Activated naive CD4-positive, alpha-beta T cell treated with anti-CD3 and anti-CD28 coated beads for 36 hours (primary cell): ENCODE measurements at regions of chr12 and their contacts with region 1.

Region 1: DNA sequence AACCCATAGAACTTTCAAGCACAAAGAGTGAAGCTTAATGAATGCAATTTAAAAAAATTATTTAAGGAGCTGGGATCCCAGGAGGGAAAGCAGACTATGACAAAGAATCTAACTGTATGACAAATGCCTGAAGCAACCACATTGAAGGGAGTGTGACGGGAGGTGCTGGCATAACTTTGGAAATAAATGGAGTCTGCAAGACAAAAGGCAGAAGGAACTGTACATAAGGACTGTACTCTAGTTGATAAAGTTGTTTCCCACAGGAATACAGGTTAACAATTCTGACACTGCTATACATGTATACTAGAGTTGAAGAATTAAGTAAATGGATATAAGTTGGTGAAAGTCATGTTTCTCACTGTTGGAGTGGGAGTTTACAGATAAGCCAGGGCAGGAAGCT is 41.2 kb upstream of the WSCD2 start:
- DNase-seq: no peak
- H3K4me3 Mint-ChIP-seq: no peak overlapping the region
- H3K27ac Mint-ChIP-seq: no peak overlapping the region
- H3K4me1 Mint-ChIP-seq: no peaks in the 10 kb centered on the region
- H3K27me3 Mint-ChIP-seq: no peaks in the 10 kb centered on the region

Region 2: GRCh38 chr12:108099073-108099472 is 11.2 kb after region 1 on chr12:
- CTCF ChIA-PET with region 1: interaction called, 11 read pairs
- intact Hi-C with region 1: no loop called
- DNase-seq: no peak
- H3K4me3 Mint-ChIP-seq: no peak overlapping the region
- H3K27ac Mint-ChIP-seq: no peak overlapping the region
- H3K4me1 Mint-ChIP-seq: no peaks in the 10 kb centered on the region
- H3K27me3 Mint-ChIP-seq: peaks cover 13% of the 10 kb centered on the region

Region 3: DNA sequence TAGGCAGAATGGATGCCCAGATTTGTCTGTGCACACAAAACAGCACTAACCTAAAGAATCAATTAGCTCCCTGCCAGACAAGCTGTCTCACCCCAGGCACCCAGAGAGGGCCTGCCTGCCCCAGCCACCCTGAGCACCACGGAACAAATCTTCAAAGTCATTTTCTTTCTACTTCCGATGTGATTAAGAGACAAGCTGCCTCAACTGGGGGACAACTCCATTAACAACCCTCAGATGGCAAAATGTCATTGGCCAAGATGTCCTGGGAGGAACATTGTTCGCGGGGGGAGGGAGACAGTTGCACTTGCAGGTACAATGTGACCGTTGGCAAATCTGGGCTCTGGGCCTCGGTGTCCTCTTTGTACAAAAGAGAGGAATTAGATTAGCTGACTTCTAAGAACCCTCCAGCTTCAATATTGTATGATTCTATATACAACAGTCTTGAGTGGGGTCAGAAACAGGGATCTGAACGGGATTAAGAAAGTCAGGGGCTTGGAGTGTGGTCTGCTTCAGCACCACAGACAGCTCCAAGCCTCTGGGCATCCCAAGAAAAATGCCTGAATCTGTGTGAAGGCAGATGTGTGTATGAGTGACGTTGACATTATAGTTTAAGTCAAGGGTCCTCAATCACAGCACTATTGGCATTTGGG is 294.0 kb after region 1 on chr12:
- CTCF ChIA-PET with region 1: no interaction called
- intact Hi-C with region 1: no loop called
- DNase-seq: no peak
- H3K4me3 Mint-ChIP-seq: no peak overlapping the region
- H3K27ac Mint-ChIP-seq: no peak overlapping the region
- H3K4me1 Mint-ChIP-seq: no peaks in the 10 kb centered on the region
- H3K27me3 Mint-ChIP-seq: peaks cover 6% of the 10 kb centered on the region